K562 (cell line): ENCODE measurements at regions of chr21 and their contacts with region 1.

Region 1: GRCh38 chr21:39183237-39184007 is at the start of gene PSMG1:
- DNase-seq: peak; percentile 95 to 99 (median 96)
- ATAC-seq: peak; percentile 92
- H3K4me3 ChIP-seq: peak within 1 kb of the TSS; percentile 82
- H3K27ac ChIP-seq: peak within 1 kb of the TSS; percentile 93
- H3K4me1 ChIP-seq: peaks cover 8 to 11% of the 10 kb centered on the region in 2 experiments; a peak in 4 of 5 replicates
- H3K27me3 ChIP-seq: no peaks in the 10 kb centered on the region
- CTCF ChIP-seq: no peak
- EP300 ChIP-seq: no peak
- POLR2A ChIP-seq: peak; percentile 97
- RAD21 ChIP-seq: no peak
- polyA plus RNA-seq, gene PSMG1: 54.5 to 88.1 TPM

Region 2: DNA sequence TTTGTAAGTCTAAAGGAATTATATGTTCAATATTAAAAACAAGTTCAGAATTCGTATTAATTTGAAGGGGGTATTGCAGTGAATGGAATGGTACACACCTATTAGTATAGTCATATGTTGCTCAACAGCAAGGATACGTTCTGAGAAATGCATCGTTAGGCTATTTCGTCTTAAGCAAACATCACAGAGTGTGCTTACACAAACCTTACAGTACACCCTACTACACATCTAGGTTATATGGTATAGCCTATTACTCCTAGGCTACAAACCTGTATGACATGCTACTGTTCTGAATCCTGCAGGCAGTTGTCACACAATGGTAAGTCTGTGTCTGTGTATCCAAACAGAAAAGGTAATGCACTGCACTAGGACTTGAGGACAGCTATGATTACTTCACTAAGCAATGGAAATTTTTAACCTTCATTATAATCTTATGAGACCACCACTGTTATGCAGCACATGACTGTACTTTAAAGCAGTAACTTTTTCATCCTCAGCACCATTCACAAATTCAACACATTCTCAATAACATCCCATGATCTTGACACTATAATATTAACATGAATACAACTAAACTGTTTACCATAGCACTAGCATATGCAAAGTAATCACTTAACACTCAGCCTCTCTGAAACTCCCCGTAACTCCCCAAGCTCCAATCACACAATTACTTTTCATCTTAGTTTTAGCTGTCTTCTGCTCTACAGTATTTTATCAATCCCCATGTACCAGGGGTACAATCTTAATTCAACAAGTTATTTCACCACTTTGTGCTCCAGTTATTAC is 14.2 kb after region 1 on chr21:
- CTCF ChIA-PET with region 1: no interaction called
- POLR2A ChIA-PET with region 1: interaction called, 19 read pairs
- in situ Hi-C with region 1: no loop called
- intact Hi-C with region 1: no loop called
- DNase-seq: no peak
- ATAC-seq: no peak
- H3K4me3 ChIP-seq: no peak overlapping the region
- H3K27ac ChIP-seq: no peak overlapping the region
- H3K4me1 ChIP-seq: no peaks in the 10 kb centered on the region
- H3K27me3 ChIP-seq: no peaks in the 10 kb centered on the region
- CTCF ChIP-seq: no peak
- EP300 ChIP-seq: no peak
- POLR2A ChIP-seq: no peak
- RAD21 ChIP-seq: no peak